ENCODE measurements at regions of chr12 and their contacts with region 1.

Region 1: DNA sequence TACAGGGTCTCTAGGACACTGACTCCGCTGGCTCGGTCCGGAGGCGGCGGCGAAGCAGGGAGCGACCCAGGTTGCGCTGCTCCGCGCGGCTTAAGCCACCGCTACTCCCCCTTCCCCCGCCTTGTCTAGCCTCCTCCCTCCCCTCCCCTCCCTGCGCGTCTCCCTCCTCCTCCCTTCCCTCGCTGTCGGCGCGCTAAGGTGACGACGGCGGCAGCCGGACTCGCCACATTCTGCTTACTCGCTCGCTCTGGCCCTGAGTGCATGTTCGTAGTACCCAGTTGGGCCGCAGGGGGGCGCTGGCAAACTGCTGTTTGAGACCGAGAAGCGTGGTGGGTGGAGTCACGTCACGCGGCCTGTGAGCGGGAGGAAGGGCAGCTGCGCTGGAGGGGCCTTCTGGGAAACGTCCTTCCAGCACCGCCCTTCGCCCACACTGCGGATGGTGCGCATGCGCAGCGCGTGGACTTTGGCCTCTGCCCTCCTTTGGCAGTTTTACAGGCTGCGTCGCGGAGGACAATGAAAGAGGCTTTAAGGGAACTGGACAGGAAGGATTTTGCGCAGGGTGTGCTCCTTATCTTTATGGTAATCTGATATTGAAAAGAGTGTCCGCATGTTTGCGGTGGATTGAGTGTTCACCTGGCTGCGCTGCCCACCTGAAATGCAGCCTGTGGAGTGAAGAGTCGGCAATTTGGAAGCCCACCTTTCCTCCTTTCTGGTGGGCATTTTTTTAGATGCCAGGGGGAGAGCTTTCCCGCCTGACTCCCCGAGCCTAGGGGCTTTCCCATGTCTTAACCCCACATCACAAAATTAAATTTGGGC is at the start of gene SCAF11:
- DNase-seq: peak; percentile 99
- ATAC-seq: peak; percentile 85
- H3K4me3 ChIP-seq: peak within 1 kb of the TSS; percentile 92
- H3K27ac ChIP-seq: peak within 1 kb of the TSS; percentile 99
- H3K4me1 ChIP-seq: peaks cover 8% of the 10 kb centered on the region
- H3K27me3 ChIP-seq: no peaks in the 10 kb centered on the region
- CTCF ChIP-seq: peak; percentile 93 to 99 (median 98); a peak in 5 of 6 replicates
- EP300 ChIP-seq: peak; percentile 37 to 53; a peak in 2 of 4 replicates
- POLR2A ChIP-seq: peak; percentile 88
- RAD21 ChIP-seq: peak; percentile 88
- polyA plus RNA-seq, gene SCAF11: 42.0 to 44.9 TPM

Region 2: DNA sequence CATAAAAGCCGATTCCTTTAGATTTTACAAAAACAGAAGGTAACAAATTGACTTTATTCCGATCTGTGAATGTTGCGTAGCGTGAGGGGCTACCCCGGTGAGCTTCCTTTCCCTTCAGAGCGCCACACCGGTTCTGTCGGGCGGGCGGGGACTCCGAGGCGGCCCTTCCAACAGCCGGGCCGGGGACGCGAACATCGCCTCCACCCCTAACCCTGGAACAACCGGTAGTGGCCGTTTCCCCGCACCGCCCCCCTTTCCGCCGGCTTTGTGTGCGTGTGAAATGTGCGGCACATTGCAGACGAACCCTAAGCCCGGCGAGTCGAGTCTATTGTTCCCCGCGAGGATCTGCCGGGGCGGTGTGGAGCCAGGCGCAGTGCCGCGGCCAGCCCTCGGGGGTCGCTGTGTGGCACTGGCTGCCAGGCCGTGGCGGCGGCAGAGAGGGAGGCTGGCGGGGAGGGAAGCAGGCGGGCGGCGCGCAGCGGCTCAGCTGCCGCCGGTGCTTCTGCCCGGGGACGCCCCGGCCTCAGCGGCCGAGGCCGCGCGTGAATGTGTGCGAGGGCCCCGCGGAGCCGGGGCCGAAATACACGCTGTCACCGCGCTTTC is 261.9 kb before region 1 on chr12:
- CTCF ChIA-PET with region 1: interaction called, 16 read pairs
- POLR2A ChIA-PET with region 1: interaction called, 9 read pairs
- RAD21 ChIA-PET with region 1: interaction called, 22 read pairs
- SMC1A ChIA-PET with region 1: interaction called, 3 read pairs
- in situ Hi-C with region 1: no loop called
- intact Hi-C with region 1: loop called (anchors 2 kb)
- DNase-seq: peak; percentile 87
- ATAC-seq: peak; percentile 73
- H3K4me3 ChIP-seq: peak overlapping the region; percentile 93
- H3K27ac ChIP-seq: peak overlapping the region; percentile 95
- H3K4me1 ChIP-seq: no peaks in the 10 kb centered on the region
- H3K27me3 ChIP-seq: no peaks in the 10 kb centered on the region
- CTCF ChIP-seq: peak; percentile 94 to 98 (median 96)
- EP300 ChIP-seq: peak; percentile 36 to 45; a peak in 1 of 4 replicates
- POLR2A ChIP-seq: peak; percentile 96
- RAD21 ChIP-seq: peak; percentile 64

Region 3: DNA sequence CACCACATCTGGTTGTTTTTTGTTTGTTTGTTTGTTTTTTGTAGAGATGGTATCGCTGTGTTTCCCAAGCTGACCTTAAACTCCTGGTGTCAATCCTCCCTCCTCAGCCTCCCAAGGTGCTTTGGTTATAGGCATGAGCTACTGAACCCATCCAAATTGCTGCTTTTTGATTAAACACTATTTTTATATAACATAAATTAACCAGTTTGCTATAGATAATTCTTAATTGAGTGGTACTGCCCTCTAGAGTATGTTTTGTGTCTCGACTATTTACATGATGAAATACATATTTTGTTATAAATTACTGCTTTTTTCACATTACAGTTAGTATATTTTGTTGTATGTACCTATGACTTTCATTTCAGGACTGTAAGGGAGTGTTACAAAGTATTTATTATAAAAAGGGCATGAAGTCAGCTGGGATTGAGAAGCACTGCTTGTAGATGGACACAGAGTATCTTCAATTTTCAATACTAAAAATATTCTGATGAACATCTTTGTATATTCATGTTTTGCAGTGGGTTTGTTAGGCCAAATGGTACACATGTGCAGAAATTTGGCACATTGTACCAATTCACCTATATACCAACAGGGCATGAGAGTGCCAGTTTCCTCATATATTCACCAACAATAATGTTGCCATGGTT is 14.6 kb after region 1 on chr12:
- CTCF ChIA-PET with region 1: interaction called, 9 read pairs
- POLR2A ChIA-PET with region 1: no interaction called
- RAD21 ChIA-PET with region 1: interaction called, 3 read pairs
- SMC1A ChIA-PET with region 1: interaction called, 10 read pairs
- in situ Hi-C with region 1: no loop called
- intact Hi-C with region 1: no loop called
- DNase-seq: no peak
- ATAC-seq: no peak
- H3K4me3 ChIP-seq: no peak overlapping the region
- H3K27ac ChIP-seq: no peak overlapping the region
- H3K4me1 ChIP-seq: no peaks in the 10 kb centered on the region
- H3K27me3 ChIP-seq: no peaks in the 10 kb centered on the region
- CTCF ChIP-seq: no peak; a peak in 2 of 6 replicates
- EP300 ChIP-seq: no peak
- POLR2A ChIP-seq: no peak
- RAD21 ChIP-seq: 0 out of 2 replicates have a peak, but pooled peaks have one; percentile 3

Region 4: DNA sequence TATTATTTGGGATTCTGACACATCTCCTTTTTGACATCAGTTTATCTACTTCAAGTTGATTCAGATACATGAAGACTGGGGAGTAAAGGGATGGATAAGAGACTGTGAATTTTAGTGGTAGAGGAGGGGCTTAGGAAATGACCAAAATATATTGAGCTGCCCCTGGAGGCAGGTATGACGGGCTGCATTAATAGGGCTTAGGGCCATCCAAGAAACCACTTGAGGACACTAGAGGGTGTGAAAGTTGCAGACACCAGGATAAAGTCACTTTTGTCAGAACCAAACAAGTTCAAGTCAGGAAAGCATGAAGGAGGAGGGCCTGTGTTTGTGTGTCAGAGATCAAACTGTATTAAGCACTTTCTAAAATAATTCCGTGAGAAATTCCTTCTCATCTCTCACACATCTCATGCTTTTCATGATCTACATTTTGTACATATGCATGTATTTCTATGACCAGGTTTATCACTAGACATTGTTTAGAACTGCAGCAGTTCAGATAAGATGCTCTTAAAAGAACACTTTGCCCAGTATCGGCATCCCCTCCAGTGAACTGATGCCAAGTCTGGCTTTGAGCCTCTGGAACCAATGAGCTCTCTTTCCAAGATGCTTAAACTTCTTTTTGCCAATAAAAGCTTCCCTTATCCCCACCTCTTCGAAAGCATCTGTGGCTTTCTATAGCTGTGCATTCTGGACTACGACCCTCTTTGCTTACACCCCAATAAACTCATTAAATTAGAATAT is 141.2 kb after region 1 on chr12:
- CTCF ChIA-PET with region 1: no interaction called
- POLR2A ChIA-PET with region 1: interaction called, 5 read pairs
- RAD21 ChIA-PET with region 1: no interaction called
- SMC1A ChIA-PET with region 1: no interaction called
- in situ Hi-C with region 1: no loop called
- intact Hi-C with region 1: loop called (anchors 5 kb)
- DNase-seq: no peak
- ATAC-seq: peak; percentile 75
- H3K4me3 ChIP-seq: no peak overlapping the region
- H3K27ac ChIP-seq: no peak overlapping the region
- H3K4me1 ChIP-seq: no peaks in the 10 kb centered on the region
- H3K27me3 ChIP-seq: no peaks in the 10 kb centered on the region; a peak in 1 of 4 replicates
- CTCF ChIP-seq: peak in 2 of 3 experiments; percentile 29 to 41; a peak in 2 of 6 replicates
- EP300 ChIP-seq: no peak
- POLR2A ChIP-seq: no peak
- RAD21 ChIP-seq: peak; percentile 52; the same call in 1 of the 2 replicates

Region 5: DNA sequence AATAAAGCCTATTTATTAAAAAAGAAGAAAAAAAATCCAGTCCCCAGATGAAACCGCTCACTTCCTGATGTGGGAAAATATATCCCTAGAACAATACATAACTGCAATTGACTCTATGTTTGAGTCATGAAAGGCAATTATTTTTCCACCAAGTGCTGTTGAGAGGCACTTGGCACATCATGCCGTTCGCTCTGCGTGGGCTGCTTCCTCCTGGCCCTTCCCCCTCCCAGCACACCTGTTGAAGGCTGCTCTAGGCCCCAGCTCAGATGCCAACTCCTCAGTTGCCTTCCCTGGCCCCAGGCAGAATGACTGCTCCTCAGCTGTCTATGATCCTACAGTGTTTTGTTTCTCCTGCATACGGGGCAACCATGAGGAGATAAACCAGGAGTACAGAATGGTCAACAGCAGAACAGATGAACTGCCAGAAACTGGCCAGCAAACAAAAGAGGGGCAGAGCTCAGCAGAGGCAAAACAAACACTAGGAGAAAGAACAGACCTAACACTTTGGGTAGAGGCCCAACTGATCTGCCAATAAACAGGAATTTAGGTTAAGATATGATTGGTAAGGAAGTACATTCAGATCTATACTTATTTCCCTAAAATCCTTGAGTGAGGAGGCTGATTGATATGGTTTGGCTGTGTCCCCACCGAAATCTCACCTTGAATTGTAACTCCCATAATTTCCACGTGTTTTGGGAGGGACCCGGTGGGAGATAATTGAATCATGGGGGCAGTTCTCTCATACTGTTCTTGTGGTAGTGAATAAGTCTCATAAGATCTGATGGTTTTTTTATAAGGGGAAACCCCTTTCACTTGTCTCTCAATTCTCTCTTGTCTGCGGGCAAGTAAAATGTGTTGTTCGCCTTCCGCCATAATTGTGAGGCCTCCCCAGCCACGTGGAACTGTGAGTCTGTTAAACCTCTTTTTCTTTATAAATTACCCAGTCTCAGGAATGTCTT is 219.5 kb after region 1 on chr12:
- CTCF ChIA-PET with region 1: no interaction called
- POLR2A ChIA-PET with region 1: no interaction called
- RAD21 ChIA-PET with region 1: interaction called, 3 read pairs
- SMC1A ChIA-PET with region 1: interaction called, 6 read pairs
- in situ Hi-C with region 1: loop called (anchors 10 kb)
- intact Hi-C with region 1: loop called (anchors 5 kb)
- DNase-seq: peak; percentile 68
- ATAC-seq: peak; percentile 84
- H3K4me3 ChIP-seq: no peak overlapping the region
- H3K27ac ChIP-seq: peak overlapping the region; percentile 85
- H3K4me1 ChIP-seq: peaks cover 59% of the 10 kb centered on the region
- H3K27me3 ChIP-seq: no peaks in the 10 kb centered on the region
- CTCF ChIP-seq: no peak
- EP300 ChIP-seq: peak; percentile 83 to 86
- POLR2A ChIP-seq: peak; percentile 52; the same call in 1 of the 2 replicates
- RAD21 ChIP-seq: no peak

Region 6: DNA sequence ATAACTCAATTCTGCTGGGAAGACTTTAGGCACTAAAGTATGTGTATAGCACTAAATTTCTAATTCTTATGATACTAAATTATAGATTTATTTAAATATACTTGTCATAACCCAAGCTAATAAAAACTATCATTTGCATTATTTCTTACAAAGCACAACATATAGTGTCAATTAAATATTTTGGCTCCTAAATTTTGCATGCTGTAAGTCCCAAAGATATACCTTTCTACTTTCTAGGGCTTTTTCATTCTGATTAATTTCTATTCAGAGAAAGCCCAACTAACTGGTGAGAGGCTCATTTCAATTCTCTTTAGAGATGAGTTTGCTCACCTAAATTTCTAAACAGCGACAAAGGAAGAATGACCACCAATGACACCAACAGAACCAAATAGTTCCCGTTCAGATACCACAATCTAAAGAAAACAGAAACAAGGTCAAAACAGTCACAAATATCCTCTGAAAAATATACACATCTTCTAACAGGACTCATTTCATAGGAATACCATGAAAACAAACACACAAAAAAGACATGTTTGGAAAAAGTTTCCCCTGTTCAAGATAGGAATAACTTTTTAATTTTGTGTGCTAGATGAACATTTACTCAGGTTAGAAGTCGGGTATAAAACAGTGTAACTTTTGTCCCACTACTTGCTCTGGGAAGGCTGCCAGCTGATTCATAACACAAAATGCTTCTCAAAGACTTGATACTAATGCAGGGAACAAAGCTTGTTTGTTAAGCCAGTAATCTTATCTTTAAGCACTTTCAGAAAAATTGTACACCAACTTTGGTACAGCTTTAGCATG is 374.3 kb after region 1 on chr12:
- CTCF ChIA-PET with region 1: no interaction called
- POLR2A ChIA-PET with region 1: no interaction called
- RAD21 ChIA-PET with region 1: interaction called, 3 read pairs
- SMC1A ChIA-PET with region 1: no interaction called
- in situ Hi-C with region 1: no loop called
- intact Hi-C with region 1: loop called (anchors 5 kb)
- DNase-seq: no peak
- ATAC-seq: peak; percentile 37
- H3K4me3 ChIP-seq: peak overlapping the region; percentile 34; the same call in 1 of the 2 replicates
- H3K27ac ChIP-seq: peak overlapping the region; percentile 22
- H3K4me1 ChIP-seq: peaks cover 37% of the 10 kb centered on the region
- H3K27me3 ChIP-seq: no peaks in the 10 kb centered on the region
- CTCF ChIP-seq: no peak
- EP300 ChIP-seq: 0 out of 4 replicates have a peak, but pooled peaks of 1 of the 2 experiments have one; percentile 42
- POLR2A ChIP-seq: no peak
- RAD21 ChIP-seq: no peak

Region 7: DNA sequence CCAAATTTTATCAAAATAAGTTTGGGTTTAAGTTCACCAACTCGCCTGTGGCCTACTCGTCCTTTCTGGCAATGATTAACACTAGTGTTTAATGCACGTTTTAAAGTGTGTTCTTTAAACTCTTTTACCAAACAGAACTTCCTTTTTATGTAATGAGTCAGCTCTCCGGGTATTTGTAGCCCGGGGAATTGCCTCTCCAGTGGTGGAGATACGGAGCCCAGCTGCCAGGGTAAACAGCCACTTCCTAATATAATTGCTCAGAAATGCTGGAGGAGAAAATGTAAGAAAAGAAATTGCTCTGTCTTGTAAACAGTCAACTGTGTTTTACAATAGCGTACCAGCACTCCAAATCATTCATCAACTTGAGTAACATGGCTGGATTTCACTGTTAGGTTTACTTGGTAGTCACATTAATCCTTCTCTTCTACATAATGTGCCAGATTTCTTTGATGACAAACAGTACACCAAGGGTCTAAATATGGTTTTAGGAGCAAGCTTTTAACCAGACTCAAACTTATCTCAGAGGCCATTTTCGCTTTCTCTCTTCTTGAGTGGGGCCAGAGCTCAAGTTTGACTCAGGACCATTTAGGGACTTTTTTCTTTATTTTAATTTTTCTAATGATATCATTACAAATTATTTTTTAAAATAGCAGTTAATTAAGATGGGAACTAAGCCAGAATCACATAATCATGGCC is 483.1 kb after region 1 on chr12:
- CTCF ChIA-PET with region 1: no interaction called
- POLR2A ChIA-PET with region 1: no interaction called
- RAD21 ChIA-PET with region 1: no interaction called
- SMC1A ChIA-PET with region 1: no interaction called
- in situ Hi-C with region 1: no loop called
- intact Hi-C with region 1: no loop called
- DNase-seq: peak; percentile 51
- ATAC-seq: peak; percentile 72
- H3K4me3 ChIP-seq: peak overlapping the region; percentile 30; the same call in 1 of the 2 replicates
- H3K27ac ChIP-seq: peak overlapping the region; percentile 63
- H3K4me1 ChIP-seq: peaks cover 7% of the 10 kb centered on the region; the same call in 1 of the 2 replicates
- H3K27me3 ChIP-seq: no peaks in the 10 kb centered on the region
- CTCF ChIP-seq: no peak
- EP300 ChIP-seq: peak in 1 of 2 experiments; percentile 65; a peak in 2 of 4 replicates
- POLR2A ChIP-seq: no peak
- RAD21 ChIP-seq: no peak

Region 8: GRCh38 chr12:47021298-47021697 is 1030.6 kb after region 1 on chr12:
- CTCF ChIA-PET with region 1: no interaction called
- POLR2A ChIA-PET with region 1: no interaction called
- RAD21 ChIA-PET with region 1: interaction called, 3 read pairs
- SMC1A ChIA-PET with region 1: no interaction called
- in situ Hi-C with region 1: no loop called
- intact Hi-C with region 1: loop called (anchors 1 kb)
- DNase-seq: peak; percentile 11
- ATAC-seq: peak; percentile 78
- H3K4me3 ChIP-seq: no peak overlapping the region
- H3K27ac ChIP-seq: no peak overlapping the region
- H3K4me1 ChIP-seq: no peaks in the 10 kb centered on the region
- H3K27me3 ChIP-seq: no peaks in the 10 kb centered on the region
- CTCF ChIP-seq: peak; percentile 50 to 68 (median 66)
- EP300 ChIP-seq: no peak
- POLR2A ChIP-seq: no peak
- RAD21 ChIP-seq: peak; percentile 80